MCF 10A (cell line): ENCODE measurements at regions of chr18 and their contacts with region 1.

Region 1: DNA sequence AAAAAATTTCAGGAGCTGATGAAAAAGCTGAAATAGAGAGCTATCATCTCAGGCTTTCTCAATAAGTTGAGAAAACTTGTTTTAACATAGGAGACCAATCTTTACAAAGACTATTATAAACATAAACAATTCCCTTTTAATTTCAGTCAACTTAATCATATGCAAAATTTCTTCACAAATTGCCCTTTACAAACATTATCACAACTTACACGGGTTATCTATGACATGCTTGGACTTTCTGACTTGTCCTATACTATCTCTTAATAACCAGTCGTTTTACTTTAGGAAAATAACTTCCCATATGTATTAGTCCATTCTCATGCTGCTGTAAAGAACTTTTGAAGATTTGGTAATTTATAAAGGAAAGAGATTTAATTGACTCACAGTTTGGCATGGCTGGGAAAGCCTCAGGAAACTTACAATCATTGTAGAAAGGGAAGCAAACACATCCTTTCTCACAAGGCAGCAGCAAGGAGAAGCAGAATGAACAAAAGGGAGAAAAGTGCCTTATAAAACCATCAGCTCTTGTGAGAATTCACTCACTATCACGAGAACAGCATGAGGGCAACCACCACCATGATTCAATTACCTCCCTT is 1583.7 kb upstream of the CELF4 start:
- DNase-seq: peak; percentile 30
- H3K4me3 Mint-ChIP-seq: no peak overlapping the region
- H3K27ac Mint-ChIP-seq: no peak overlapping the region
- H3K4me1 Mint-ChIP-seq: no peaks in the 10 kb centered on the region
- H3K27me3 Mint-ChIP-seq: no peaks in the 10 kb centered on the region
- CTCF ChIP-seq: no peak

Region 2: GRCh38 chr18:39241534-39241933 is 92.2 kb after region 1 on chr18:
- CTCF ChIA-PET with region 1: no interaction called
- POLR2A ChIA-PET with region 1: no interaction called
- intact Hi-C with region 1: loop called (anchors 10 kb)
- DNase-seq: no peak
- H3K4me3 Mint-ChIP-seq: no peak overlapping the region
- H3K27ac Mint-ChIP-seq: no peak overlapping the region
- H3K4me1 Mint-ChIP-seq: no peaks in the 10 kb centered on the region
- H3K27me3 Mint-ChIP-seq: no peaks in the 10 kb centered on the region
- CTCF ChIP-seq: no peak